WTC11 (cell line): ENCODE measurements at regions of chr2 and their contacts with region 1.

Region 1: DNA sequence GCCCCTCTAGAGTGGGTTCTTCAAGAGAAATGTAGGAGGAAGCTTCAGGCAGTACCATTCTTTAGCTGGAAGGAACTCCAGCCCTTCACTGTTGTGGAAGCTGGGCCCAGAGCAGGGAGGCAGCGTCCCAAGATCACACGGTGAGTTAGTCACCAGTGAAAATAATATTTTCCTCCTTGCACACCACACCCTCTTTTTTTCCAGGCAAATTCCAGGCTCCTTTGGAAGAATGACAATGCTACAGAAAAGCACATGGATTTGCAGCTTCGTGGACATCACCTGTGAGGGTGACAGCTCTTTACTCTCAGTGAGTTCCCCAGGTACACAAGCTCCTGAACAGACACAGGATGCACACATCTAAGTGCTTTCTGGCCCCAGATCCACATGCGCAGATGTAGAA is 157.1 kb downstream of the COL6A3 start:
- DNase-seq: no peak
- ATAC-seq: no peak
- H3K4me3 Mint-ChIP-seq: no peak overlapping the region
- H3K27ac Mint-ChIP-seq: 0 out of 2 replicates have a peak overlapping the region, but pooled peaks have one; percentile 12
- H3K4me1 Mint-ChIP-seq: peaks cover 10% of the 10 kb centered on the region
- H3K27me3 Mint-ChIP-seq: no peaks in the 10 kb centered on the region
- CTCF ChIP-seq: no peak

Region 2: GRCh38 chr2:237269138-237269875 is 12.4 kb after region 1 on chr2:
- CTCF ChIA-PET with region 1: interaction called, 20 read pairs
- POLR2A ChIA-PET with region 1: no interaction called
- DNase-seq: no peak
- ATAC-seq: no peak
- H3K4me3 Mint-ChIP-seq: no peak overlapping the region
- H3K27ac Mint-ChIP-seq: no peak overlapping the region
- H3K4me1 Mint-ChIP-seq: peaks cover 13% of the 10 kb centered on the region
- H3K27me3 Mint-ChIP-seq: no peaks in the 10 kb centered on the region; the same call in 1 of the 2 replicates
- CTCF ChIP-seq: no peak

Region 3: GRCh38 chr2:237304763-237305514 is 48.1 kb after region 1 on chr2:
- CTCF ChIA-PET with region 1: no interaction called
- POLR2A ChIA-PET with region 1: no interaction called
- DNase-seq: no peak
- ATAC-seq: no peak
- H3K4me3 Mint-ChIP-seq: no peak overlapping the region
- H3K27ac Mint-ChIP-seq: no peak overlapping the region
- H3K4me1 Mint-ChIP-seq: no peaks in the 10 kb centered on the region
- H3K27me3 Mint-ChIP-seq: peaks cover 5% of the 10 kb centered on the region; the same call in 1 of the 2 replicates
- CTCF ChIP-seq: no peak